ENCODE measurements at regions of chr17 and their contacts with region 1.

Region 1: GRCh38 chr17:2828397-2829038 is 32.3 kb downstream of the RAP1GAP2 start:
- DNase-seq: peak; percentile 90 to 94
- H3K4me3 ChIP-seq: no peak overlapping the region
- H3K4me3 Mint-ChIP-seq: no peak overlapping the region
- H3K27ac Mint-ChIP-seq: no peak overlapping the region
- H3K4me1 ChIP-seq: peaks cover 5% of the 10 kb centered on the region
- H3K4me1 Mint-ChIP-seq: peaks cover 11% of the 10 kb centered on the region
- H3K27me3 ChIP-seq: no peaks in the 10 kb centered on the region
- H3K27me3 Mint-ChIP-seq: no peaks in the 10 kb centered on the region
- CTCF ChIP-seq: peak; percentile 96 to 97

Region 2: GRCh38 chr17:2776589-2777241 is 51.8 kb before region 1 on chr17:
- CTCF ChIA-PET with region 1: no interaction called
- POLR2A ChIA-PET with region 1: no interaction called
- intact Hi-C with region 1: loop called (anchors 1 kb)
- DNase-seq: peak; percentile 82 to 84
- H3K4me3 ChIP-seq: peak overlapping the region; percentile 59
- H3K4me3 Mint-ChIP-seq: peak overlapping the region; percentile 83
- H3K27ac Mint-ChIP-seq: peak overlapping the region; percentile 2
- H3K4me1 ChIP-seq: peaks cover 6% of the 10 kb centered on the region
- H3K4me1 Mint-ChIP-seq: no peaks in the 10 kb centered on the region
- H3K27me3 ChIP-seq: no peaks in the 10 kb centered on the region
- H3K27me3 Mint-ChIP-seq: peaks cover 7% of the 10 kb centered on the region
- CTCF ChIP-seq: no peak

Region 3: GRCh38 chr17:2847381-2848333 is 19.1 kb after region 1 on chr17:
- CTCF ChIA-PET with region 1: interaction called, 6 read pairs
- POLR2A ChIA-PET with region 1: no interaction called
- intact Hi-C with region 1: loop called (anchors 2 kb)
- DNase-seq: no peak
- H3K4me3 ChIP-seq: no peak overlapping the region
- H3K4me3 Mint-ChIP-seq: no peak overlapping the region
- H3K27ac Mint-ChIP-seq: no peak overlapping the region
- H3K4me1 ChIP-seq: peaks cover 9% of the 10 kb centered on the region
- H3K4me1 Mint-ChIP-seq: peaks cover 18% of the 10 kb centered on the region
- H3K27me3 ChIP-seq: no peaks in the 10 kb centered on the region
- H3K27me3 Mint-ChIP-seq: no peaks in the 10 kb centered on the region
- CTCF ChIP-seq: no peak

Region 4: DNA sequence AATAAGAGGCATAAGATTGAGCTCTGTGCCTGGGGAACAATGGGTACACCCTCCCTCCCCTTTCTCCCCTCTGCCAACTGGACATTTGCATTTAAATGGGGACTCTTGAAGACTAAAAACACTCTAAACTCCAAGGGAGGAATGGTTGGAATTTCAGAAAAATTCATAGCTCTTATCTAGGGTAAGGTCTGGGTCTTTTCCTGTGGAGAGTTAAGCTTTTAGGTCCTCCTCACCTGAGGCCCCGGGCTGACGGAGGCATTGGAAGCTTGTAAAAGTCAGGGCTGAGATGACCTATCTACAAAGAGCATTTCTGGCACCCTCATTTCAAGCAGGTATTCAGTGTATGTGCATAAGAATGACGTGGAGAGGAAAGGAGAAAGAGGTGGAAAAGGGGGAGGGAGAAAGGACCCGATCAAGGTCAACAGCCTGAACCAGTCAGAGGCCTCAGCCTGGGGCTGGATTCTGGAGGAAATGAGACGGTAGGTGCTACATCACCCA is 45.7 kb after region 1 on chr17:
- CTCF ChIA-PET with region 1: no interaction called
- POLR2A ChIA-PET with region 1: interaction called, 10 read pairs
- intact Hi-C with region 1: no loop called
- DNase-seq: peak; percentile 89 to 92
- H3K4me3 ChIP-seq: no peak overlapping the region
- H3K4me3 Mint-ChIP-seq: peak overlapping the region; percentile 47
- H3K27ac Mint-ChIP-seq: peak overlapping the region; percentile 85
- H3K4me1 ChIP-seq: peaks cover 74% of the 10 kb centered on the region
- H3K4me1 Mint-ChIP-seq: peaks cover 66% of the 10 kb centered on the region
- H3K27me3 ChIP-seq: no peaks in the 10 kb centered on the region
- H3K27me3 Mint-ChIP-seq: no peaks in the 10 kb centered on the region
- CTCF ChIP-seq: no peak

Region 5: GRCh38 chr17:2929881-2930533 is 101.5 kb after region 1 on chr17:
- CTCF ChIA-PET with region 1: no interaction called
- POLR2A ChIA-PET with region 1: no interaction called
- intact Hi-C with region 1: loop called (anchors 1 kb)
- DNase-seq: peak; percentile 74 to 75
- H3K4me3 ChIP-seq: no peak overlapping the region
- H3K4me3 Mint-ChIP-seq: no peak overlapping the region
- H3K27ac Mint-ChIP-seq: no peak overlapping the region
- H3K4me1 ChIP-seq: peaks cover 11% of the 10 kb centered on the region; the same call in 1 of the 2 replicates
- H3K4me1 Mint-ChIP-seq: peaks cover 12% of the 10 kb centered on the region
- H3K27me3 ChIP-seq: no peaks in the 10 kb centered on the region
- H3K27me3 Mint-ChIP-seq: no peaks in the 10 kb centered on the region
- CTCF ChIP-seq: peak; percentile 89 to 93

Region 6: GRCh38 chr17:3012926-3013581 is 184.5 kb after region 1 on chr17:
- CTCF ChIA-PET with region 1: interaction called, 12 read pairs
- POLR2A ChIA-PET with region 1: no interaction called
- intact Hi-C with region 1: loop called (anchors 1 kb)
- DNase-seq: peak; percentile 69 to 78
- H3K4me3 ChIP-seq: no peak overlapping the region
- H3K4me3 Mint-ChIP-seq: no peak overlapping the region
- H3K27ac Mint-ChIP-seq: no peak overlapping the region
- H3K4me1 ChIP-seq: no peaks in the 10 kb centered on the region
- H3K4me1 Mint-ChIP-seq: no peaks in the 10 kb centered on the region
- H3K27me3 ChIP-seq: no peaks in the 10 kb centered on the region
- H3K27me3 Mint-ChIP-seq: no peaks in the 10 kb centered on the region
- CTCF ChIP-seq: peak; percentile 81 to 90

Measured in Caco-2 (cell line).